CD14-positive monocyte (primary cell): ENCODE measurements at regions of chr19 and their contacts with region 1.

Region 1: DNA sequence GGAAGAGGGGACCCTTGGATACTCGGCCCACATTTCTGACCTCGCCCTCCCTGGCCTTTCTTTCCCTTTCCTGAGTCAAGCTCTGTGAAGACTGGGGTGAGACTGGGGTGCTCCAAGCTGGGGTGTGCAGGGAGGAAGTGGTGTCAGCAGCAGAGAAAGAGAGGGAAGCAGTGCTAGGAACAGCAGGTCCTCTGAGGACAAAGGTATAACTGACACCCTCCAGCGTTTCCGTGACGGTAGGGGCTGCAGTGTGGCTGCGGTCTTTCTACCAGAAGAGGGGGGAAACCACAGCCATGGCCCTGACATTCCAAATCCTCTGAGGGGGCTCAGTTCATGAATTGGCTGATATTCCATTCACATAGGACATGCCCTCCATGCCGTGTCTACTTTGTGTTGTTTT is 1.1 kb downstream of the KIR3DL2 start:
- DNase-seq: peak in 2 of 3 donors; percentile 20 to 44
- H3K4me3 ChIP-seq: no peak overlapping the region
- H3K4me3 Mint-ChIP-seq: no peak overlapping the region
- H3K27ac ChIP-seq: no peak overlapping the region
- H3K27ac Mint-ChIP-seq: peak overlapping the region in 1 of 7 donors; percentile 66
- H3K4me1 ChIP-seq: peaks cover 19% of the 10 kb centered on the region in 2 donors
- H3K4me1 Mint-ChIP-seq: peaks cover 32% of the 10 kb centered on the region
- H3K27me3 ChIP-seq: peaks cover 0 to 2% of the 10 kb centered on the region in 2 donors
- H3K27me3 Mint-ChIP-seq: peaks cover 7 to 24% (median 23%) of the 10 kb centered on the region in 3 donors
- CTCF ChIP-seq: no peak

Region 2: GRCh38 chr19:54738715-54739114 is 112.6 kb before region 1 on chr19:
- intact Hi-C with region 1: loop called in 1 of 2 experiments (anchors 2 kb)
- DNase-seq: no peak
- H3K4me3 ChIP-seq: no peak overlapping the region
- H3K4me3 Mint-ChIP-seq: no peak overlapping the region
- H3K27ac ChIP-seq: no peak overlapping the region
- H3K27ac Mint-ChIP-seq: no peak overlapping the region
- H3K4me1 ChIP-seq: peaks cover 10 to 13% of the 10 kb centered on the region in 2 donors
- H3K4me1 Mint-ChIP-seq: peaks cover 19% of the 10 kb centered on the region
- H3K27me3 ChIP-seq: no peaks in the 10 kb centered on the region
- H3K27me3 Mint-ChIP-seq: peaks cover 5 to 16% (median 8%) of the 10 kb centered on the region in 3 donors
- CTCF ChIP-seq: no peak